Head of caudate nucleus (tissue), 42 donors: ENCODE measurements at regions of chr10 and their contacts with region 1.

Region 1: GRCh38 chr10:5623081-5623748 is 43.2 kb downstream of the ASB13 start:
- DNase-seq: peak; percentile 69 to 91 (median 84)

Region 2: GRCh38 chr10:5442065-5442989 is 180.9 kb before region 1 on chr10:
- intact Hi-C with region 1: loop called (anchors 5 kb)
- DNase-seq: peak in 10 of 42 donors; percentile 20 to 75 (median 42)